Ascending aorta (tissue), 2 donors: ENCODE measurements at regions of chr11 and their contacts with region 1.

Region 1: GRCh38 chr11:47407746-47408590 is at the start of gene SLC39A13:
- DNase-seq: peak; percentile 91 to 98
- H3K4me3 ChIP-seq: peak within 1 kb of the TSS; percentile 82 to 87
- H3K27ac ChIP-seq: peak within 1 kb of the TSS; percentile 95 to 99
- H3K4me1 ChIP-seq: peaks cover 10 to 33% of the 10 kb centered on the region in 2 donors
- H3K27me3 ChIP-seq: no peaks in the 10 kb centered on the region
- CTCF ChIP-seq: peak; percentile 78 to 99 (median 85)
- total RNA-seq, gene SLC39A13: 246 TPM

Region 2: GRCh38 chr11:46916286-46917108 is 491.5 kb before region 1 on chr11:
- intact Hi-C with region 1: loop called (anchors 10 kb)
- DNase-seq: peak in 1 of 2 donors; percentile 81
- H3K4me3 ChIP-seq: peak overlapping the region; percentile 78 to 89
- H3K27ac ChIP-seq: peak overlapping the region; percentile 34 to 58
- H3K4me1 ChIP-seq: peaks cover 8 to 13% of the 10 kb centered on the region in 2 donors
- H3K27me3 ChIP-seq: no peaks in the 10 kb centered on the region
- CTCF ChIP-seq: peak in 1 of 3 experiments; percentile 18

Region 3: GRCh38 chr11:47269002-47269828 is 138.8 kb before region 1 on chr11:
- intact Hi-C with region 1: loop called (anchors 1 kb)
- DNase-seq: peak; percentile 67 to 94
- H3K4me3 ChIP-seq: peak overlapping the region; percentile 81 to 90
- H3K27ac ChIP-seq: peak overlapping the region; percentile 86 to 95
- H3K4me1 ChIP-seq: peaks cover 10 to 19% of the 10 kb centered on the region in 2 donors
- H3K27me3 ChIP-seq: no peaks in the 10 kb centered on the region
- CTCF ChIP-seq: peak in 2 of 3 experiments; percentile 12 to 15

Region 4: GRCh38 chr11:47426061-47426956 is 18.3 kb after region 1 on chr11 and contains the start of gene PSMC3:
- intact Hi-C with region 1: loop called (anchors 1 kb)
- DNase-seq: peak; percentile 90 to 99
- H3K4me3 ChIP-seq: peak within 1 kb of the TSS; percentile 74 to 97
- H3K27ac ChIP-seq: peak within 1 kb of the TSS; percentile 85 to 92
- H3K4me1 ChIP-seq: peaks cover 9 to 14% of the 10 kb centered on the region in 2 donors
- H3K27me3 ChIP-seq: no peaks in the 10 kb centered on the region
- CTCF ChIP-seq: no peak
- total RNA-seq, gene PSMC3: 34.8 TPM

Region 5: GRCh38 chr11:47578524-47579460 is 170.8 kb after region 1 on chr11 and contains the starts of genes KBTBD4 and NDUFS3:
- intact Hi-C with region 1: loop called (anchors 5 kb)
- DNase-seq: peak; percentile 57 to 92
- H3K4me3 ChIP-seq: peak within 1 kb of the TSS; percentile 74 to 93
- H3K27ac ChIP-seq: peak within 1 kb of the TSS; percentile 75 to 83
- H3K4me1 ChIP-seq: peaks cover 14 to 15% of the 10 kb centered on the region in 2 donors
- H3K27me3 ChIP-seq: no peaks in the 10 kb centered on the region
- CTCF ChIP-seq: no peak
- total RNA-seq, gene KBTBD4: 14.8 TPM
- total RNA-seq, gene NDUFS3: 19.9 TPM